Heart left ventricle (tissue), 16 donors: ENCODE measurements at regions of chr11 and their contacts with region 1.

Region 1: GRCh38 chr11:117107701-117108590 is 9.7 kb upstream of the SIK3 start:
- DNase-seq: no peak
- ATAC-seq: no peak
- H3K4me3 ChIP-seq: no peak overlapping the region
- H3K27ac ChIP-seq: peak overlapping the region in 4 of 12 donors; percentile 35 to 66 (median 55)
- H3K4me1 ChIP-seq: peaks cover 0 to 7% (median 0%) of the 10 kb centered on the region in 12 donors
- H3K27me3 ChIP-seq: no peaks in the 10 kb centered on the region
- CTCF ChIP-seq: no peak
- POLR2A ChIP-seq: no peak

Region 2: GRCh38 chr11:116732271-116733042 is 375.5 kb before region 1 on chr11:
- intact Hi-C with region 1: loop called in 1 of 10 experiments (anchors 5 kb)
- DNase-seq: peak in 4 of 5 donors; percentile 40 to 67 (median 49)
- ATAC-seq: peak; percentile 35 to 83 (median 70)
- H3K4me3 ChIP-seq: no peak overlapping the region
- H3K27ac ChIP-seq: no peak overlapping the region
- H3K4me1 ChIP-seq: peaks cover 0 to 13% (median 0%) of the 10 kb centered on the region in 12 donors
- H3K27me3 ChIP-seq: peaks cover 0 to 7% (median 0%) of the 10 kb centered on the region in 9 donors
- CTCF ChIP-seq: peak; percentile 68 to 90 (median 80)
- POLR2A ChIP-seq: no peak

Region 3: GRCh38 chr11:116787786-116788486 is 320.0 kb before region 1 on chr11 and contains the start of gene ZPR1:
- intact Hi-C with region 1: loop called in 9 of 10 experiments (anchors 1 to 5 kb)
- DNase-seq: peak; percentile 85 to 92 (median 88)
- ATAC-seq: peak; percentile 80 to 90 (median 88)
- H3K4me3 ChIP-seq: peak within 1 kb of the TSS; percentile 74 to 99 (median 96)
- H3K27ac ChIP-seq: peak within 1 kb of the TSS; percentile 61 to 93 (median 84)
- H3K4me1 ChIP-seq: peaks cover 0 to 31% (median 16%) of the 10 kb centered on the region in 12 donors
- H3K27me3 ChIP-seq: no peaks in the 10 kb centered on the region
- CTCF ChIP-seq: no peak
- POLR2A ChIP-seq: peak in 1 of 2 donors; percentile 66
- total RNA-seq, gene ZPR1: 9.7 to 48.7 (median 27.1) TPM

Region 4: GRCh38 chr11:116792869-116793771 is 314.8 kb before region 1 on chr11:
- intact Hi-C with region 1: loop called (anchors 1 to 5 kb)
- DNase-seq: no peak
- ATAC-seq: no peak
- H3K4me3 ChIP-seq: no peak overlapping the region
- H3K27ac ChIP-seq: no peak overlapping the region
- H3K4me1 ChIP-seq: peaks cover 0 to 23% (median 7%) of the 10 kb centered on the region in 12 donors
- H3K27me3 ChIP-seq: no peaks in the 10 kb centered on the region
- CTCF ChIP-seq: no peak
- POLR2A ChIP-seq: no peak

Region 5: GRCh38 chr11:116879800-116880625 is 227.9 kb before region 1 on chr11:
- intact Hi-C with region 1: loop called in 8 of 10 experiments (anchors 1 to 5 kb)
- DNase-seq: no peak
- ATAC-seq: peak; percentile 67 to 90 (median 85)
- H3K4me3 ChIP-seq: no peak overlapping the region
- H3K27ac ChIP-seq: no peak overlapping the region
- H3K4me1 ChIP-seq: peaks cover 0 to 32% (median 2%) of the 10 kb centered on the region in 12 donors
- H3K27me3 ChIP-seq: no peaks in the 10 kb centered on the region
- CTCF ChIP-seq: peak; percentile 52 to 81 (median 66)
- POLR2A ChIP-seq: no peak